Right ventricle myocardium inferior (tissue), 1 donor: ENCODE measurements at regions of chr14 and their contacts with region 1.

Region 1: DNA sequence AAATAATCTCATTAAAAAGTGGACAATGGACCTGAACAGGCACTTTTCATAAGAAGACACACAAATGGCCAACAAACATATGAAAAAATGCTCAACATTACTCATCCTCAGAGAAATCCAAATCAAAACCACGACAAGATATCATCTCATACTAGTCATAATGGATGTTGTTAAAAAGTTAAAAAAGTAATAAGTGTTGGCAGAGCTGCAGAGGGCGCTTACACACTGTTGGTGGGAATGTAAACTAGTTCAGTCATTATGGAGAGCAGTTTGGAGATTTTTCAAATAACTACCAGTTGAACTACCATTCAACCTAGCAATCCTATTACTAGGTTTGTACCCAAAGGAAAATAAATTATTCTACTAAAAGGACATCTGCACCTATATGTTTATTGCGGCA is 47.2 kb downstream of the FOXG1 start:
- DNase-seq: no peak
- ATAC-seq: no peak

Region 2: GRCh38 chr14:28831126-28831525 is 17.3 kb after region 1 on chr14:
- intact Hi-C with region 1: loop called (anchors 1 kb)
- DNase-seq: no peak
- ATAC-seq: no peak

Region 3: GRCh38 chr14:29178971-29179370 is 365.2 kb after region 1 on chr14:
- intact Hi-C with region 1: no loop called
- DNase-seq: no peak
- ATAC-seq: no peak